T-cell (primary cell): ENCODE measurements at regions of chr2 and their contacts with region 1.

Region 1: GRCh38 chr2:214088536-214088935 is 322.3 kb upstream of the VWC2L start:
- DNase-seq: no peak
- ATAC-seq: no peak
- H3K4me3 ChIP-seq: no peak overlapping the region
- H3K4me3 Mint-ChIP-seq: no peak overlapping the region
- H3K27ac ChIP-seq: no peak overlapping the region
- H3K27ac Mint-ChIP-seq: no peak overlapping the region
- H3K4me1 ChIP-seq: no peaks in the 10 kb centered on the region
- H3K4me1 Mint-ChIP-seq: no peaks in the 10 kb centered on the region
- H3K27me3 ChIP-seq: no peaks in the 10 kb centered on the region
- H3K27me3 Mint-ChIP-seq: no peaks in the 10 kb centered on the region

Region 2: DNA sequence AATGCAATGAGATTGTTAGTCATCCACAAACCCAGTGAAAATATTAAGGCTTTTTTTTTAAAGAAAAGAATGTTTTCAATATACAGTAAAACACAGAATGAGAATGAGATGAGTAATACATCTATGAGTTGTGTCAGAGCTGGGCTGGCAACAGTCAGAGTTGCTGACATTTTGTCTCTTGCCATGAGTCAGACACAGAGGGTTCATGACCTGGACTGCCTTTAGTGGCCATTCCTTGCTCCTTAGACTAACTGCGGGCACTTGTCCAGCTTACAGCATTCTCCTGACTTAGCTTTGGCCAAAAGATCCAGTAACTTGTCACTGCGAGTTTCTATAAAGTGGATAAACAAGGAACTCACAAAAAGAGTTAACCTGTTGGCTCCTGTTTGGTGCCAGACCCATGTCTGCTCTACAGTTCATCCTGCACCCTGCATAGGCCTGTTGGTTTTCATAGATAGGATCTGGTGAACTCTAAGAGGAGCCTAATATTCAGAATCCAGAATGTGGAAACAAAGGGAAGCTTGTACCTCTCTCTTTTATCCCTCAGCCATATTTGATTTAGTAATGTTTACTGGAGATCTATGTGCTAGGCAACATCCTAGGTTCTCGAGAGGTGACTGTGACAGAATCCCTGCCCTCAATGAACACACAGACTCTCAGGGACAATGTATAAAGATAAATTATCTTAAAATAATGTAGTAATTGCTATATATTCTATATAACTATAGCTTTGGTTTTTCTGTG is 69.1 kb before region 1 on chr2:
- CTCF ChIA-PET with region 1: no interaction called
- POLR2A ChIA-PET with region 1: no interaction called
- DNase-seq: no peak
- ATAC-seq: no peak
- H3K4me3 ChIP-seq: no peak overlapping the region
- H3K4me3 Mint-ChIP-seq: no peak overlapping the region
- H3K27ac ChIP-seq: no peak overlapping the region
- H3K27ac Mint-ChIP-seq: no peak overlapping the region
- H3K4me1 ChIP-seq: no peaks in the 10 kb centered on the region
- H3K4me1 Mint-ChIP-seq: no peaks in the 10 kb centered on the region
- H3K27me3 ChIP-seq: no peaks in the 10 kb centered on the region
- H3K27me3 Mint-ChIP-seq: no peaks in the 10 kb centered on the region

Region 3: DNA sequence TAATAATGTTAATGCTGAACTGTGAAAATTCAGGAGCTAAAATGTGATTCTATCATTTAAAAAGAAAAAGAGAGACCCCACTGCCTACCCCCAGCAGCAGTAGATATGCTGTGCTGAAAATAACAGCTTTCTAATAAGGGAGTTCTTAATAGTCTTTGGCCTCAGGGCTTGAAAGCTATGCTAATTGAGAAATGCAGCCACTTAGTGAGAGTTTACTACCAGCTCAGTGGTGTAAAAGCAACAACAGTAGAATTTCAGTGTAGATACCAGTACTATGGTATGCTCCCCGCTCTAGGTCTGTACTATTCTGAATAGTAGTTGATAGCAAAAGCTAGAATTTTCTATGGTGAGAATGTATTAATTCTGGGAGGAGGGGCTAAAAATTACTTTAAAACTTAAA is 19.2 kb after region 1 on chr2:
- CTCF ChIA-PET with region 1: no interaction called
- POLR2A ChIA-PET with region 1: interaction called in 1 of 2 experiments, 10 read pairs
- DNase-seq: no peak
- ATAC-seq: no peak
- H3K4me3 ChIP-seq: no peak overlapping the region
- H3K4me3 Mint-ChIP-seq: no peak overlapping the region
- H3K27ac ChIP-seq: no peak overlapping the region
- H3K27ac Mint-ChIP-seq: no peak overlapping the region
- H3K4me1 ChIP-seq: no peaks in the 10 kb centered on the region
- H3K4me1 Mint-ChIP-seq: no peaks in the 10 kb centered on the region
- H3K27me3 ChIP-seq: no peaks in the 10 kb centered on the region
- H3K27me3 Mint-ChIP-seq: no peaks in the 10 kb centered on the region